ENCODE measurements at regions of chr2 and their contacts with region 1.

Region 1: DNA sequence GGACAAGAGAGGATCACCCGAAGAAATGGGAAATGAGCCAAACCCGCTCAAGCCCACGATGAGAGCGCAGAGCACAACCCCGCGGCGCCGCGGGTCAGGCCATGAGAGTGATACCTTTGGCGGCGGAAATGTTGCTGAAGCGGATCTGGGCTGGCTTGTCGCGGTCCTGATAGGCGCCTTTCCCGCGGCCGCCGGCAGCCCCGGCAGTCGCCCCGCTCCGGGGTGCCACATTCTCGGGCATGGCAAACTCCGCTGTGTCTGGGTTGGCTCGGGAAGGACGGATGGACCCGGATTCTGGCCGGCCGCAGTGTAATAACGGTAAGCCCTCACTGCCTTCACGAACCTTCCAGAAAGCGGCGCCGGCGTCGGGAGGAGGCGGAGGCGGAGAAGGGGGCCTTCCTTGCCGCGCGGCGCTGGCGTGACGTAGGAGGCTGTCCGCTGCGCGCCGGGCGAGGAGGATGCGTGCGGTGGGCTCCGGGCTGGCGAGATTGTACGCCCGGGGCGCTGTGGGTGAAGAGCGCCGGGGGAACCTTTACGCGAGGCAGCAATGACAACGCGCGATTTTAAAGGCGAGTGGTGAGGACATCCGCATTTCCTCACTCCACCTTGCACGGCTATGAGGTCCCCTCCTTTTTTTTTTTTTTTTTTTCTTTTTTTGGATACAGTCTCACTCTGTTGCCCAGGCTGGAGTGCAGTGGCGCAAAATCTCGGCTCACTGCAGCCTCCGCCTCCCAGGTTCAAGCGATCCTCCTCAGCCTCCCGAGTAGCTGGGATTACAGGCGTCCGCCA is at the start of gene CCT4:
- DNase-seq: peak; percentile 88 to 97 (median 94)
- H3K4me3 ChIP-seq: peak within 1 kb of the TSS; percentile 84 to 86
- H3K4me3 Mint-ChIP-seq: peak within 1 kb of the TSS; percentile 96 to 100 (median 99)
- H3K27ac ChIP-seq: peak within 1 kb of the TSS; percentile 95
- H3K27ac Mint-ChIP-seq: peak within 1 kb of the TSS; percentile 97 to 100 (median 99)
- H3K4me1 ChIP-seq: peaks cover 28% of the 10 kb centered on the region
- H3K4me1 Mint-ChIP-seq: peaks cover 14 to 38% (median 22%) of the 10 kb centered on the region in 4 donors
- H3K27me3 ChIP-seq: no peaks in the 10 kb centered on the region
- H3K27me3 Mint-ChIP-seq: no peaks in the 10 kb centered on the region
- total RNA-seq, gene CCT4: 91.0 to 101 TPM

Region 2: DNA sequence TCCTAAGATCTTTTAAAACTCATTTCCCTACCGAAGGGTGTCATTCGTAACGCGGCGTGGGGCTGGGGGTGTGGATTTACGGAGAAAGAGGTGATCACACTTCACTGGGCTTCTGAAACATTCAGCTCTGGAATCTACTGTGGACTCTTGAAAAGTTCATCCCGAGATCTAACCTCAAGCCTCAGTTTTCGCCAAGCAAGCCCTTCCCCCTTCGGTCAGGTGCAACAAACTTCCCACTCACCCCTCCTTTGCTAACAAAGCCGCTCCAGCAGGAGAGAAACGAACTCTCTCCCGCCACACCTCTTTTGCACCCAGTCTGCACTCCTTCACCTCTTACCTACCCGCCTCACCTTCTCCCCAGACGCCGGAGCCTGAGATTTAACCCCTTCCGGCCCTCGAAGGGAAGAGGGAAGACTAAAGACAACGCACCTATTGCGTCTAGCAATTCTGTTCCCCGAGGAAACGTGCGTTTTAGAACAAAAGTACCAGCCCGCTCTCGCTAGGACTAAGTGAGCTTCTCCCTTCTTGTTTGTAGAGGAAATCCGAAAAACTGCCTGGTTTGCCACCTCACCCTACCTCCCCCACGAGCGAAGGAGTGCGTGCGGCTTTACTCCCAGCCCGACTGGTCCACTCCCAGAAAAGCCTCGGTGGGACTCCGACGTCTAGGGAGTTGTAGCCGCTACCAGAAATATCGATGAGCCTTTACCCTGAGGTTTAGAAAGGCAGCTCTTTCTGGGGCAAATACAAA is 871.5 kb before region 1 on chr2:
- CTCF ChIA-PET with region 1: no interaction called
- POLR2A ChIA-PET with region 1: no interaction called
- intact Hi-C with region 1: loop called (anchors 1 kb)
- DNase-seq: peak; percentile 73 to 82 (median 76)
- H3K4me3 ChIP-seq: peak overlapping the region; percentile 91 to 99
- H3K4me3 Mint-ChIP-seq: peak overlapping the region; percentile 98 to 100 (median 99)
- H3K27ac ChIP-seq: peak overlapping the region; percentile 80
- H3K27ac Mint-ChIP-seq: peak overlapping the region; percentile 92 to 98 (median 97)
- H3K4me1 ChIP-seq: peaks cover 25% of the 10 kb centered on the region
- H3K4me1 Mint-ChIP-seq: peaks cover 13 to 52% (median 36%) of the 10 kb centered on the region in 4 donors
- H3K27me3 ChIP-seq: no peaks in the 10 kb centered on the region
- H3K27me3 Mint-ChIP-seq: no peaks in the 10 kb centered on the region

Region 3: DNA sequence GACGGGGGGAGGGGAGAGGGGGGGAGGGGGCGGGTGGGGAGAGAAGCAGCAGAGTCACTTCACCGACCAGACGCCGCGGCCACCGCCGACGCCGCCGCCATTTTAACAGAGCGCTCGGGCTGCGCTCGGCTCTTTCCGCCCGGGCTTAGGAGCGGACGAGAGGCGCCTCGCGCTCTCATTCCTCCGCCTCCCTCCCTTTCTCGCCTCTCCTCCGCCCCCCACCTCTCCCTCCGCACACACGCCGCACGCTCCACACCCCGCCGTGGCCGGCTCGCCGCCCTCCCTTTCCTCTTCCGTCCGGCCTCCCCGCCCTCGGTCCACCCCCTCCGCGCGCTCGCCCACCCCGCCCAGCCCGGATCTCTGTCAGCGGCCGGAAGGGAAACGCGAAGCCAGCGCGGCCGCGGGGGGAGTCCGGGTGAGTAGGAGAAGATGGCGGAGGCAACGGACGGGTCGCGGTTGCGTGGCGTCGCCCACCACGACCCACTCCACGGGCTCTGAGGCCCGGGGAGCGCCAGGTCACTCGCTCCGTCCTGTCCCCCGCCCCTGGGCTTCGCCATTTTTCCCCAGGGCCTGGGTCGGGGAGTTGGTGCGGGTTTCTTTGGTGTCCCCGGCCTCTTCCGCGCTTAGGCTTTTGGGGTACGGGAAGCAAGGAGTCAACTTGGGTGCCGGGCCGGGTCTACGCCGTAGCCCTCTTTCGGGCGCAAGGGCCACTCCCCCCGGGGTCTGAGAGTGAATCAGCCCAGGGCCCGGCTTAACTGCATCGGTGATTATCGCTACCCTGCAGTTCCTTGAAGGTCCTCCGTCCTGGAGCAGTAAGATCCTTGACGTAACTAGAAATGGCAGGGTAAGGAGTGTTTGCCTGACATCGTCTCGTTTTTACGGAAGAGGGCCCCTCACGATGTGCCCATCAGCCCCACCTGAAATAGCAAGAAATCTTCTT is 417.2 kb before region 1 on chr2 and contains the start of gene USP34:
- CTCF ChIA-PET with region 1: no interaction called
- POLR2A ChIA-PET with region 1: no interaction called
- intact Hi-C with region 1: loop called (anchors 1 kb)
- DNase-seq: peak; percentile 89 to 95 (median 92)
- H3K4me3 ChIP-seq: peak within 1 kb of the TSS; percentile 68 to 89
- H3K4me3 Mint-ChIP-seq: peak within 1 kb of the TSS; percentile 92 to 98 (median 95)
- H3K27ac ChIP-seq: peak within 1 kb of the TSS; percentile 98
- H3K27ac Mint-ChIP-seq: peak within 1 kb of the TSS; percentile 93 to 100 (median 99)
- H3K4me1 ChIP-seq: peaks cover 41% of the 10 kb centered on the region
- H3K4me1 Mint-ChIP-seq: peaks cover 12 to 46% (median 29%) of the 10 kb centered on the region in 4 donors
- H3K27me3 ChIP-seq: no peaks in the 10 kb centered on the region
- H3K27me3 Mint-ChIP-seq: no peaks in the 10 kb centered on the region
- total RNA-seq, gene USP34: 163 to 164 TPM

Region 4: GRCh38 chr2:61764035-61764800 is 124.2 kb before region 1 on chr2:
- CTCF ChIA-PET with region 1: no interaction called
- POLR2A ChIA-PET with region 1: no interaction called
- intact Hi-C with region 1: loop called (anchors 1 kb)
- DNase-seq: peak; percentile 95 to 98 (median 96)
- H3K4me3 ChIP-seq: peak overlapping the region; percentile 78 to 83
- H3K4me3 Mint-ChIP-seq: peak overlapping the region; percentile 93 to 98 (median 96)
- H3K27ac ChIP-seq: peak overlapping the region; percentile 94
- H3K27ac Mint-ChIP-seq: peak overlapping the region; percentile 95 to 99 (median 99)
- H3K4me1 ChIP-seq: peaks cover 15% of the 10 kb centered on the region
- H3K4me1 Mint-ChIP-seq: peaks cover 8 to 22% (median 15%) of the 10 kb centered on the region in 4 donors
- H3K27me3 ChIP-seq: no peaks in the 10 kb centered on the region
- H3K27me3 Mint-ChIP-seq: peaks cover 0 to 2% of the 10 kb centered on the region in 2 donors

Region 5: GRCh38 chr2:61854474-61855182 is 33.8 kb before region 1 on chr2:
- CTCF ChIA-PET with region 1: interaction called, 3 read pairs
- POLR2A ChIA-PET with region 1: interaction called, 4 read pairs
- intact Hi-C with region 1: loop called (anchors 1 kb)
- DNase-seq: peak; percentile 92 to 98 (median 94)
- H3K4me3 ChIP-seq: peak overlapping the region; percentile 85 to 95
- H3K4me3 Mint-ChIP-seq: peak overlapping the region; percentile 94 to 99 (median 96)
- H3K27ac ChIP-seq: peak overlapping the region; percentile 69
- H3K27ac Mint-ChIP-seq: peak overlapping the region; percentile 87 to 98 (median 95)
- H3K4me1 ChIP-seq: peaks cover 16% of the 10 kb centered on the region
- H3K4me1 Mint-ChIP-seq: peaks cover 7 to 25% (median 16%) of the 10 kb centered on the region in 4 donors
- H3K27me3 ChIP-seq: no peaks in the 10 kb centered on the region
- H3K27me3 Mint-ChIP-seq: no peaks in the 10 kb centered on the region

Region 6: GRCh38 chr2:61905372-61906185 is 17.1 kb after region 1 on chr2 and contains the start of gene COMMD1:
- CTCF ChIA-PET with region 1: no interaction called
- POLR2A ChIA-PET with region 1: interaction called, 5 read pairs
- intact Hi-C with region 1: loop called (anchors 1 kb)
- DNase-seq: peak; percentile 75 to 81 (median 78)
- H3K4me3 ChIP-seq: peak within 1 kb of the TSS; percentile 94 to 99
- H3K4me3 Mint-ChIP-seq: peak within 1 kb of the TSS; percentile 96 to 98 (median 97)
- H3K27ac ChIP-seq: peak within 1 kb of the TSS; percentile 75
- H3K27ac Mint-ChIP-seq: peak within 1 kb of the TSS; percentile 75 to 95 (median 92)
- H3K4me1 ChIP-seq: peaks cover 21% of the 10 kb centered on the region
- H3K4me1 Mint-ChIP-seq: peaks cover 12 to 39% (median 26%) of the 10 kb centered on the region in 4 donors
- H3K27me3 ChIP-seq: no peaks in the 10 kb centered on the region
- H3K27me3 Mint-ChIP-seq: no peaks in the 10 kb centered on the region
- total RNA-seq, gene COMMD1: 16.7 to 17.8 TPM

Region 7: GRCh38 chr2:62202019-62202722 is 313.7 kb after region 1 on chr2:
- CTCF ChIA-PET with region 1: no interaction called
- POLR2A ChIA-PET with region 1: no interaction called
- intact Hi-C with region 1: no loop called
- DNase-seq: no peak
- H3K4me3 ChIP-seq: no peak overlapping the region
- H3K4me3 Mint-ChIP-seq: peak overlapping the region in 7 of 8 donors; percentile 3 to 58 (median 19)
- H3K27ac ChIP-seq: no peak overlapping the region
- H3K27ac Mint-ChIP-seq: peak overlapping the region; percentile 12 to 74 (median 38)
- H3K4me1 ChIP-seq: peaks cover 87% of the 10 kb centered on the region
- H3K4me1 Mint-ChIP-seq: peaks cover 69 to 100% (median 84%) of the 10 kb centered on the region in 4 donors
- H3K27me3 ChIP-seq: no peaks in the 10 kb centered on the region
- H3K27me3 Mint-ChIP-seq: no peaks in the 10 kb centered on the region

Region 8: GRCh38 chr2:62705007-62705829 is 816.8 kb after region 1 on chr2 and contains the start of gene EHBP1:
- CTCF ChIA-PET with region 1: no interaction called
- POLR2A ChIA-PET with region 1: no interaction called
- intact Hi-C with region 1: loop called (anchors 10 kb)
- DNase-seq: peak; percentile 97 to 99 (median 97)
- H3K4me3 ChIP-seq: peak within 1 kb of the TSS; percentile 80 to 94
- H3K4me3 Mint-ChIP-seq: peak within 1 kb of the TSS; percentile 86 to 96 (median 94)
- H3K27ac ChIP-seq: peak within 1 kb of the TSS; percentile 50
- H3K27ac Mint-ChIP-seq: peak within 1 kb of the TSS; percentile 86 to 97 (median 91)
- H3K4me1 ChIP-seq: peaks cover 43% of the 10 kb centered on the region
- H3K4me1 Mint-ChIP-seq: peaks cover 28 to 39% (median 31%) of the 10 kb centered on the region in 4 donors
- H3K27me3 ChIP-seq: no peaks in the 10 kb centered on the region
- H3K27me3 Mint-ChIP-seq: no peaks in the 10 kb centered on the region
- total RNA-seq, gene EHBP1: 26.8 to 31.9 TPM

Region 9: GRCh38 chr2:62801814-62802523 is 913.5 kb after region 1 on chr2:
- CTCF ChIA-PET with region 1: no interaction called
- POLR2A ChIA-PET with region 1: no interaction called
- intact Hi-C with region 1: no loop called
- DNase-seq: no peak
- H3K4me3 ChIP-seq: peak overlapping the region; percentile 4 to 6
- H3K4me3 Mint-ChIP-seq: peak overlapping the region; percentile 55 to 83 (median 71)
- H3K27ac ChIP-seq: no peak overlapping the region
- H3K27ac Mint-ChIP-seq: peak overlapping the region in 4 of 7 donors; percentile 8 to 79 (median 64)
- H3K4me1 ChIP-seq: peaks cover 13% of the 10 kb centered on the region
- H3K4me1 Mint-ChIP-seq: peaks cover 20 to 26% (median 22%) of the 10 kb centered on the region in 4 donors
- H3K27me3 ChIP-seq: no peaks in the 10 kb centered on the region
- H3K27me3 Mint-ChIP-seq: no peaks in the 10 kb centered on the region

Region 10: GRCh38 chr2:63562751-63563150 is 1674.3 kb after region 1 on chr2:
- CTCF ChIA-PET with region 1: no interaction called
- POLR2A ChIA-PET with region 1: no interaction called
- intact Hi-C with region 1: no loop called
- DNase-seq: no peak
- H3K4me3 ChIP-seq: no peak overlapping the region
- H3K4me3 Mint-ChIP-seq: no peak overlapping the region
- H3K27ac ChIP-seq: no peak overlapping the region
- H3K27ac Mint-ChIP-seq: no peak overlapping the region
- H3K4me1 ChIP-seq: no peaks in the 10 kb centered on the region
- H3K4me1 Mint-ChIP-seq: peaks cover 1 to 4% (median 2%) of the 10 kb centered on the region in 4 donors
- H3K27me3 ChIP-seq: no peaks in the 10 kb centered on the region
- H3K27me3 Mint-ChIP-seq: no peaks in the 10 kb centered on the region